H1 (cell line): ENCODE measurements at regions of chr6 and their contacts with region 1.

Region 1: GRCh38 chr6:11971154-11971553 is 41.0 kb upstream of the HIVEP1 start:
- DNase-seq: no peak
- H3K4me3 ChIP-seq: no peak overlapping the region
- H3K27ac ChIP-seq: no peak overlapping the region
- H3K4me1 ChIP-seq: peaks cover 3 to 14% (median 12%) of the 10 kb centered on the region in 4 experiments
- H3K27me3 ChIP-seq: no peaks in the 10 kb centered on the region
- CTCF ChIP-seq: no peak
- EP300 ChIP-seq: no peak
- POLR2A ChIP-seq: no peak
- RAD21 ChIP-seq: no peak

Region 2: DNA sequence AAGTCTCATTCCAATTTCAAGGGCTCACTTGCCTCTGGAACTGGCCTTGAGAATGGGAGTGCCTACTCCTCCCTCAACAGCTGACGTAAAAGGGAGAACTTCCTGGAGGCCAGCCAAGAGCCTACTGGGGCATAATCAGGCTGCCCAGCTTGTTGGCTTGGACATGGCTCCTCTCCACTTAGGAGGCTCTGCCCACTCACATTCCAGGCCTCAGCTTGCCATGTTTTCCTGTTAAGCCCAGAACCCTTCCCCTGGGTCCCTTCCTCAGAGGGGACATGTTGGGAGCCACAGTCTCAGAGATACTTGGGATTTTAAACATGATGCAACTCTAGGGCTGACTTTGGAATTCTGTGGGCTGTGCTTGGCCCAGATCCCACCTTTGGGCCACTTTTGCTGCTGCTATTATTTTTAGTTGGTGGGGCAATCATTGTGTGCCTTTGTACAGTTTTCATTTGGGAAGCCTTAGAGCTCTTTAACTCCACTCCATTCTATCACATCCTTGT is 161.1 kb before region 1 on chr6:
- CTCF ChIA-PET with region 1: no interaction called
- POLR2A ChIA-PET with region 1: no interaction called
- DNase-seq: no peak
- H3K4me3 ChIP-seq: no peak overlapping the region
- H3K27ac ChIP-seq: no peak overlapping the region
- H3K4me1 ChIP-seq: peaks cover 0 to 11% (median 6%) of the 10 kb centered on the region in 4 experiments; a peak in 5 of 7 replicates
- H3K27me3 ChIP-seq: no peaks in the 10 kb centered on the region
- CTCF ChIP-seq: no peak
- EP300 ChIP-seq: no peak
- POLR2A ChIP-seq: no peak
- RAD21 ChIP-seq: no peak

Region 3: DNA sequence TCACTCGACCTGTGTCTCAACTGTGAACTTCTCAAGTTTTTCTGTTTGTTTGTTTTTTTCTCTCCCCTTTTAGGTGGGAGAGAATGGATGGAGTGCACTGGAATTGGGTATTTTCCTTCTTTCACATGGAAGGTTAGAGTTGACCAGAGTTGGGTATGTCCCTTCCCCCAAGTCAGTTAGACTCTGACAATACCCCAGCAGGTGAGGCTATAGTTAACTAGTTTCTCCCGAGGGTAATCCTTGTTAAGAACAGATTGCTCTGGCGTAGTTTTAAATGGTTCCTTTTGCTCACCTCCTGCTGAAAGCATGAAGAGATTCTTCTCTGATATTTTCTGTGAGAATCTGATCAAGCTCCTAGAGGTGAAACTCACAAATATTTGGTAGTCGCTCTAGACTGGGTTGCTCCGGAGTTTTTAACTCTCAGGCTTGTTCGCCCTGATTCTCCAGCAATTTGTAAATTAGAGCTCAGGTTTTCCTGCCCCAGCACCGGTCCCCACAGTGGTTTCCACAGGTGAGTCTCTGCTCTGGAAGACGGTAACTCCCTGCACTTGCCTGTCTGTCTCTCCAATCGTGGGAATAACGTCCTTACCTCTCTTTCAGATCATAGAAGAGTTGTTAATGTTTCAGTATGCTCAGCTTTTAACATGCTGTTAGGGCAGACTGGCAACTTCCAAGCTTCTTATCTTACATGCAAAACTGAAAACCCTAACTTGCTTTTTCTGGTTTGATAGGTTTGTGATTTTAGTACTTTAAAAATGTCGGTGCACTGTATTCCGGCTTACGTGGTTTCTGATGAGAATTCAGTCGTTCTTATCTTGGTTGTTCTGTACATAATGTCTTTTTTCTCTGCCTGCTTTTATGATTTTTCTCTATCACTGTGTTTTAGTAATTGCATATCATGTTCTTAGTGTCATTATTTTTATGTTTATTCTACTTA is 70.2 kb before region 1 on chr6:
- CTCF ChIA-PET with region 1: no interaction called
- POLR2A ChIA-PET with region 1: no interaction called
- DNase-seq: no peak
- H3K4me3 ChIP-seq: peak overlapping the region; percentile 15 to 49 (median 26); a peak in 6 of 8 replicates
- H3K27ac ChIP-seq: peak overlapping the region; percentile 34; the same call in 1 of the 2 replicates
- H3K4me1 ChIP-seq: peaks cover 0 to 2% (median under 1%) of the 10 kb centered on the region in 4 experiments; a peak in 2 of 7 replicates
- H3K27me3 ChIP-seq: no peaks in the 10 kb centered on the region
- CTCF ChIP-seq: no peak
- EP300 ChIP-seq: no peak
- POLR2A ChIP-seq: no peak
- RAD21 ChIP-seq: peak in 1 of 2 experiments; percentile 14; a peak in 1 of 4 replicates

Region 4: GRCh38 chr6:11947063-11947974 is 23.8 kb before region 1 on chr6:
- CTCF ChIA-PET with region 1: interaction called, 14 read pairs
- POLR2A ChIA-PET with region 1: no interaction called
- DNase-seq: no peak
- H3K4me3 ChIP-seq: no peak overlapping the region
- H3K27ac ChIP-seq: no peak overlapping the region
- H3K4me1 ChIP-seq: no peaks in the 10 kb centered on the region
- H3K27me3 ChIP-seq: no peaks in the 10 kb centered on the region
- CTCF ChIP-seq: peak in 1 of 3 experiments; percentile 62; a peak in 1 of 4 replicates
- EP300 ChIP-seq: no peak
- POLR2A ChIP-seq: no peak
- RAD21 ChIP-seq: peak; percentile 43 to 45

Region 5: DNA sequence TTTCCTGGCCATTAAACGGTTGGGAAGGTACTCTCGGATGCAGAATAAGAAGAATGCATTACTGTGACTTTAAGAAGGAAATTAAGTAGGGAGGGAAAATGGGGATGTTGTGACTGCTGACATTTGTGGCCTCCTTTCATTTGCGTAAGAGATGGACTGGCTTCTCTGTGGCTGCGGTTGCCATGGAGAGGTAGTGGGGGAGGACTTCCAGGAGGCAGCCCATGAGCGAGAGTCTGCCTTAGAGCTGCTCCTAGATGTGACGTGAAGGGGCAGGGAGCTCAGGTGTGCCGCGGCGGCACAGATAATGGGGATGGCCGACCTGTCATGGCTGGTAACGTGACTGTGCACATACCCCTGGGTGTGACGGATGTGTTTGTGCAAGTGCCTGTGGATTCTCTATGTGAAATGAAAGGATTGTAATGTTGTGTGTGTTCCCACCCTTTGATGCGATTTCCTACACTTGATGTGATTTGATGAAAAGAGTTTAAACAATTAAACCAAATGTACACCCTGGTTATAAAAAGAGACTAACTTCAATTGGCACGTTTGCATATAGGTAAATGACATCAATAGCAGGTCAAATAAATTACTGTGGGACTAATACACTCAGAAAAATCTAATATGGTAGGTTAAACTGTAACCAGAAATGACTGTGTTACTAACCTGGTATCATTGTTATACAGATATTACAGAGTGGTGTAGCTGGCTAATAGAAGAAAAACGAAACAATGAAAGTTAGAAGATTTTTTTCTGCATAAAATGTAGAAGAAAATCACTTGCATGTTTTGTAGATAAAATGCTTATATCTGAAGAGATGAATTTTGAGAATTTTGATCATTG is 89.8 kb after region 1 on chr6:
- CTCF ChIA-PET with region 1: no interaction called
- POLR2A ChIA-PET with region 1: no interaction called
- DNase-seq: peak in 1 of 2 experiments; percentile 46
- H3K4me3 ChIP-seq: peak overlapping the region in 1 of 4 experiments; percentile 29; a peak in 4 of 8 replicates
- H3K27ac ChIP-seq: no peak overlapping the region
- H3K4me1 ChIP-seq: peaks cover 4 to 16% (median 11%) of the 10 kb centered on the region in 4 experiments; a peak in 5 of 7 replicates
- H3K27me3 ChIP-seq: no peaks in the 10 kb centered on the region
- CTCF ChIP-seq: no peak
- EP300 ChIP-seq: no peak
- POLR2A ChIP-seq: no peak
- RAD21 ChIP-seq: no peak